Transverse colon (tissue), 4 donors: ENCODE measurements at regions of chr9 and their contacts with region 1.

Region 1: DNA sequence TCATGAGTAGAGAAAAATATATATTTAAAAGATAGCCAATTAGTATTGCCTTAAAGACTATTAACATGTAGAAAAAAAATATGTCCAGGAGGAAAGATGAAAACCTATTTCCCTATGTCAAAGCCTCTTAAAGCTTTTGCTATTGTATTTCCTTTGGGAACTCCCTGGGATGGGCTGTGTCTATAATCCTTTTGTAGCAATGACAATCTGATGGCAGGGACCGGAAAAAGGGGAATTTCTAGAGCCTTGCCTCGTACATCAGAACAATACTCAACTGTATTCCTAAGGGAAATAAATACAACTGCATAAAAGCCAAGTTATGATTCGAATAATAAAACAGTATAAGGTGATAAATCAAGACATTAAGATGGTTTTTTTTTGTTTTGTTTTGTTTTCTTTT is 257.3 kb downstream of the MLLT3 start:
- DNase-seq: no peak
- H3K4me3 ChIP-seq: no peak overlapping the region
- H3K27ac ChIP-seq: no peak overlapping the region
- H3K4me1 ChIP-seq: peaks cover 0 to 17% (median 3%) of the 10 kb centered on the region in 4 donors
- H3K27me3 ChIP-seq: no peaks in the 10 kb centered on the region
- CTCF ChIP-seq: no peak
- EP300 ChIP-seq: no peak
- POLR2A ChIP-seq: no peak

Region 2: DNA sequence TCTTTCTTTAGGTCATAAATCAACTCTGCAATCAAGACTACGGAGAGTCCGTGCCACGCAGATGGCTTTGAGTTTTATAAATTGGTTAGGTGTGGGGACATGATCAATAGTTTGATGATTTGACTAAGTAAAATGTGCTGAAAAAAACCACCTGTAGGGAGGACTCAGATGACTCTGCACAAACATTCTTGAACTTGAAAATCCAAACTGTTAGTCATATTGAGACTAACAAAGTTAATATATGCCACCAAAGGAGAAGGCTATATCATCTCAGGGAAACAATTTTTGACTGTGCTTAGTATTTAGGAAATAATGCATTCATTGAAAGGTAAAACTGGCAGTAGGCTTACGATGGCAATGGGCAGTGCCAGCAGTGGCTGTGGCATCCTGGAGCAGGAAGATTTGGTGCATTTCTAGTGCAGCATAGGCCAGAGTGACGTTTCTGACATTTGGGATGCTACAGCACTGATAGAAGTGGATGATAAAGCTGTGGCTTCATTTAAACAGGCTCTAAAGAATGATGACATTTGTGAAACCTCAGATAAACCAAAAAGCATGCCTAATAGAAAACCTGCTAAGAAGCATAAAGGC is 33.8 kb before region 1 on chr9:
- in situ Hi-C with region 1: no loop called
- intact Hi-C with region 1: loop called (anchors 2 kb)
- DNase-seq: no peak
- H3K4me3 ChIP-seq: no peak overlapping the region
- H3K27ac ChIP-seq: no peak overlapping the region
- H3K4me1 ChIP-seq: no peaks in the 10 kb centered on the region
- H3K27me3 ChIP-seq: no peaks in the 10 kb centered on the region
- CTCF ChIP-seq: no peak
- EP300 ChIP-seq: no peak
- POLR2A ChIP-seq: no peak

Region 3: DNA sequence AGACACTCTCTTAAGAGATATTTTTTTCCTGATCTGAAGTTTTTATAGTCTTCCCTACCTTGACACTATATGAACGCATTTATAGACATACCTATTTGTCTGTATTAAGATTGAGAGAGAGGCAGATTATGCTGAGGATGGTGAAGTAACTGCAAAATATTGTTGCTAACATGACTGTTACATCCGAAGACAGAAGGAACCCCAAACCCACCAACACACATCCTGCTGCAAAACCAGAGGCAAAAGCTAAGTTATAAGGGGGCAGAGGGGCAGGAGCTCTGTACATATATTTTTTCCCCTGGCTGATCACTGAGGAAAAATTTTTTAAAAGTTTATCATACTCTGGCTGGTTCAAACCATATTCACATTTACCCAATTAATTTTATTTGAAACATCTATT is 21.6 kb before region 1 on chr9:
- in situ Hi-C with region 1: no loop called
- intact Hi-C with region 1: no loop called
- DNase-seq: no peak
- H3K4me3 ChIP-seq: no peak overlapping the region
- H3K27ac ChIP-seq: no peak overlapping the region
- H3K4me1 ChIP-seq: no peaks in the 10 kb centered on the region
- H3K27me3 ChIP-seq: no peaks in the 10 kb centered on the region
- CTCF ChIP-seq: no peak
- EP300 ChIP-seq: no peak
- POLR2A ChIP-seq: no peak

Region 4: DNA sequence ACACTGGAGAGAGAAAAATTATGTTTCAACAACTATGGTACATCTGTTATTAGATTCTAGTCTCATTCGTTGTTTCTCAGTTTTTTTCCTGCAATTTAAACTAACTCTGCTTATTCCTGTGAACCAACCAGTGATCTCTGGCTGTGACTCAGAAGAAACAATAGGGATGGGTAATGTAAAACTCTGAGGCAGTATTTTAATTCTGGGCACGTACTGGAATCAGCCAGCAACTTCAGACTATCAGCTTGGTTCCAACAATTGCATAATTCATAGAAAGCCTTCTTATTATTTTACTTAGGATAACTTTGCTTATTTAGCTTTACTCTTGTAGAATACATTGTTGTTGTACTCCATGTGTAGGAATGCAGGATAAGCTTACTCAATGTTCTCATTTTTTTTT is 228.6 kb after region 1 on chr9:
- in situ Hi-C with region 1: no loop called
- intact Hi-C with region 1: no loop called
- DNase-seq: no peak
- H3K4me3 ChIP-seq: no peak overlapping the region
- H3K27ac ChIP-seq: peak overlapping the region in 1 of 4 donors; percentile 10
- H3K4me1 ChIP-seq: peaks cover 0 to 23% (median 9%) of the 10 kb centered on the region in 4 donors
- H3K27me3 ChIP-seq: no peaks in the 10 kb centered on the region
- CTCF ChIP-seq: no peak
- EP300 ChIP-seq: no peak
- POLR2A ChIP-seq: no peak